ENCODE measurements at regions of chr20 and their contacts with region 1.

Region 1: GRCh38 chr20:22691369-22692118 is 107.2 kb upstream of the FOXA2 start:
- DNase-seq: peak; percentile 88
- H3K27ac ChIP-seq: no peak overlapping the region
- CTCF ChIP-seq: peak; percentile 96

Region 2: DNA sequence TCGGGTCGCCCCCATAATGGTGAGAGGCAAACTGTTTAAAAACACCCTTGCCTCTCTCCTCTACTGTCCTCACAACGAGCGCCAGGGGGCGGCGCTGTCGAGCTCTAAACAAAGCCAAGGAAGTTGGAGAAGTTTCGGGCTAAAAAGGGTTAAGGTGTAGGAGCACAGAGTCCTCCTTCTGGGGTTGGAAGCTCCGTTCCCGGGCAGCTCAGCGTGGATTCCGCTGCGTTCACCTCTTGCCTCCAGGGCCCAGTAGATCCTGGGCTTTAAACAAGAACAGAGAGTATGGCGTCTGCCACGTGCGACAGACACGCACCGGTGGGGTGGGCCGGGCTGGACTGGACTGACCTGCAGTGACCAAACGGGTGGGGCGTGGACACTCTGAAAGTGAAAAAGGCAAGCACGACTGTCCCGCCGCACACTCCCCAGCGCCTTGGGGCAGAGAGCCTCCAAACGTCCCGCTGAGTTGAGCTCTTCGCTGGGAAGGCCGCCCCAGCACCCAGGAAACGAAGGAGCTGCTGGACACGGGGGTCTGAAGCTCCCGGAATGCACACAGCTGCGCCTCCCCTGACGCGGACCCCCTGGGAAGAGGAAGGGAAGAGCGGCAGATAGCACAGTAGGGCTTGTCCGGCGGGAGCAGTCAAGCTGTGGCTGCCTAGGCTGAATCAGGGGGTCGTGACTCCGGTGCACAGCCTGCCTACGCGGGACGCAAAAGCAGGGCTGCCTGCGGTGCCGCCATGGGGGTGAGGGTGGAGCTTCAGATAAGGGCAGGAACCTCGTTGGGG is 359.5 kb after region 1 on chr20:
- CTCF ChIA-PET with region 1: interaction called, 15 read pairs
- POLR2A ChIA-PET with region 1: interaction called, 3 read pairs
- DNase-seq: peak; percentile 57
- H3K27ac ChIP-seq: peak overlapping the region; percentile 93
- CTCF ChIP-seq: peak; percentile 77

Region 3: DNA sequence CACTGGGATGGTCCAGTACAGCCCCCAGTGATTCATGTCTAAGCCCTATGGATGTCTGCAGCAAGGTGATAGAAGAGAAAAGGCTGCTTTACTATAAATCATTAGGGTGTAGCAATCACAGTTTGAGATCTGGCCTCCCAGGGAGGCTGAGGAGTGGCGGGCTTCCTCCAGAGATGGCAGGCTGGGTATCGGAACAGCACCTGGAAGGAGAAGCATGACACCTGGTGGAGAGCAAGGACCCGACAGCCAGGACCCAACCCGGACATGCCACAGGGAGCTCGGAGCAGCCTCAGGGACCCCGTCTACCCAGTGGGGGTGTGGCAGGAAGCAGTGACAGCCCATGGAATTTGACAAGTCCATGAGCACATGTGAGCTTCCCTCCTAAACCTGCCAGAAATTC is 509.4 kb after region 1 on chr20:
- CTCF ChIA-PET with region 1: interaction called, 10 read pairs
- POLR2A ChIA-PET with region 1: no interaction called
- DNase-seq: peak; percentile 81
- H3K27ac ChIP-seq: no peak overlapping the region
- CTCF ChIP-seq: peak; percentile 61

Region 4: DNA sequence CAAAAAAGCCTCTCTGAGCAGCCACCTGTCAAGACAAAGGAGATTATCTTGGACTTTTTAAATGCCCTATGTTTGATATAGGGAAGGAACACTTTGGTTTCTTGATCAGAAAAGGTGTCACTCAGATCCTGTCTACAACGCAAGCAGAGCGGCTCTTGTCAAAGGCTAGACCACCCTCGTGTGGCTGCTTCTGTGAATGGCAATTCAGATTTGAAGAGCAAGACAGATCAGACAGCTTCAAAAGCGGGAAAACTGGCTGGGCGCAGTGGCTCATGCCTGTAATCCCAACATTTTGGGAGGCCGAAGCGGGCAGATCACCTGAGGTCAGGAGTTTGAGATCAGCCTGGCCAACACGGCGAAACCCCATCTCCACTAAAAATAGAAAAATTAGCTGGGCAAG is 649.0 kb after region 1 on chr20:
- CTCF ChIA-PET with region 1: interaction called, 35 read pairs
- POLR2A ChIA-PET with region 1: interaction called, 3 read pairs
- DNase-seq: peak; percentile 79
- H3K27ac ChIP-seq: no peak overlapping the region
- CTCF ChIP-seq: peak; percentile 86